SK-N-SH (cell line): ENCODE measurements at regions of chr12 and their contacts with region 1.

Region 1: GRCh38 chr12:49366652-49367380 is 446 bp upstream of the SPATS2 start:
- DNase-seq: peak; percentile 98
- H3K4me3 ChIP-seq: peak overlapping the region; percentile 79 to 91
- H3K27ac ChIP-seq: peak overlapping the region; percentile 90 to 95
- H3K4me1 ChIP-seq: peaks cover 3 to 6% of the 10 kb centered on the region in 2 experiments; a peak in 3 of 4 replicates
- H3K27me3 ChIP-seq: no peaks in the 10 kb centered on the region
- CTCF ChIP-seq: peak; percentile 37
- EP300 ChIP-seq: peak in 1 of 2 experiments; percentile 15; a peak in 1 of 4 replicates
- RAD21 ChIP-seq: no peak

Region 2: DNA sequence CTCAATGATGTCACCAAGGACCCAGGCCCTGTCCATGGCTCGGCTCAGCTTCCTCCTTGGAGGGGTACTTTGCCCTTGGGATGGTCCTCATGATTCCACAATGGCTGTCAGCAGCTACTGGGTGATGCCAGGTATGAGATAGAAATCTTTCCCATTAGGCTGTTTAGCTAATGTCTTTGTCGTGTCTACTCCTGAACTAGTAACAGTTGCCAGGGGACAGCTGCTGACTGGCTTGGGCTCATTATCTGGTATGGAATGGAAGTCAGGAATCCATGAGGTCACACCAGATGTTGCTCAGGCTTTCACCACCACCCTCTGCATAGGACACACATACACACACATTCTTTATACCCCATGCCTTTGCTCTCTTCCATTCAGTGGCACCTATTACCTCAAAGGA is 62.7 kb before region 1 on chr12:
- CTCF ChIA-PET with region 1: no interaction called
- POLR2A ChIA-PET with region 1: no interaction called
- DNase-seq: peak; percentile 59
- H3K4me3 ChIP-seq: no peak overlapping the region
- H3K27ac ChIP-seq: no peak overlapping the region
- H3K4me1 ChIP-seq: peaks cover 0 to 6% of the 10 kb centered on the region in 2 experiments; a peak in 1 of 4 replicates
- H3K27me3 ChIP-seq: no peaks in the 10 kb centered on the region
- CTCF ChIP-seq: no peak
- EP300 ChIP-seq: no peak
- RAD21 ChIP-seq: no peak

Region 3: DNA sequence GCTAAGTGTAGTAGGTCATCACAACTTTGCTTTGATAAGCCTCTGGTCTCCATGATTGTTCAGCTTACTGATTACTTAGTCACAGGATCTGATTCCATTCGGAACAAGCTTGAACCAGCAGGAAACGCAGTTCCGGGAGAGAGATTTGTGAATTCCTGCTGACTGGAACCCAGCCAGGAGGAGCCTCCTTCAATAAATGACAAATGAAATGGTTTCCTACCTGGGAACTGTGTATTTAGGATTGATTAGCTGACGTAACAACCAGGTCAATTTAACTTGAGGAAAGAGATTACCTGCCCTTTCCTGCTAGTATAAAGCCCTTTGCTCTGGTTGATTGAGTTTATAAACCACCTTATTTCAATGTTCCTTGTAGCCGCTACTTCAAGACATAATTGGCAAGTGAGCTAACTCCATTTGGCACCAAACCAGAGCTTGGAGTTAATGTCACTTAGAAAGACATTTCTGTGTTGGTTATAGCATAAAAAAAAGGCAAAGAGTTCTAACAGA is 136.9 kb after region 1 on chr12:
- CTCF ChIA-PET with region 1: interaction called, 617 read pairs
- POLR2A ChIA-PET with region 1: no interaction called
- DNase-seq: no peak
- H3K4me3 ChIP-seq: no peak overlapping the region
- H3K27ac ChIP-seq: peak overlapping the region; percentile 68 to 90; a peak in 3 of 4 replicates
- H3K4me1 ChIP-seq: peaks cover 0 to 57% of the 10 kb centered on the region in 2 experiments; a peak in 2 of 4 replicates
- H3K27me3 ChIP-seq: no peaks in the 10 kb centered on the region
- CTCF ChIP-seq: no peak
- EP300 ChIP-seq: peak in 1 of 2 experiments; percentile 79; a peak in 2 of 4 replicates
- RAD21 ChIP-seq: no peak

Region 4: GRCh38 chr12:49687941-49688340 is 321.1 kb after region 1 on chr12:
- CTCF ChIA-PET with region 1: no interaction called
- POLR2A ChIA-PET with region 1: no interaction called
- DNase-seq: no peak
- H3K4me3 ChIP-seq: no peak overlapping the region
- H3K27ac ChIP-seq: no peak overlapping the region
- H3K4me1 ChIP-seq: peaks cover 2 to 12% of the 10 kb centered on the region in 2 experiments; a peak in 2 of 4 replicates
- H3K27me3 ChIP-seq: no peaks in the 10 kb centered on the region
- CTCF ChIP-seq: no peak
- EP300 ChIP-seq: no peak
- RAD21 ChIP-seq: no peak